CD8-positive, alpha-beta T cell (primary cell): ENCODE measurements at regions of chr10 and their contacts with region 1.

Region 1: GRCh38 chr10:47311932-47312662 is 10.2 kb upstream of the GDF2 start:
- DNase-seq: peak; percentile 62 to 89 (median 82)
- ATAC-seq: peak; percentile 77
- H3K4me3 ChIP-seq: no peak overlapping the region
- H3K4me3 Mint-ChIP-seq: peak overlapping the region; percentile 61
- H3K27ac ChIP-seq: peak overlapping the region; percentile 6 to 10
- H3K27ac Mint-ChIP-seq: peak overlapping the region; percentile 85
- H3K4me1 ChIP-seq: peaks cover 29% of the 10 kb centered on the region
- H3K4me1 Mint-ChIP-seq: peaks cover 36% of the 10 kb centered on the region
- H3K27me3 ChIP-seq: no peaks in the 10 kb centered on the region
- H3K27me3 Mint-ChIP-seq: no peaks in the 10 kb centered on the region
- CTCF ChIP-seq: peak; percentile 92

Region 2: DNA sequence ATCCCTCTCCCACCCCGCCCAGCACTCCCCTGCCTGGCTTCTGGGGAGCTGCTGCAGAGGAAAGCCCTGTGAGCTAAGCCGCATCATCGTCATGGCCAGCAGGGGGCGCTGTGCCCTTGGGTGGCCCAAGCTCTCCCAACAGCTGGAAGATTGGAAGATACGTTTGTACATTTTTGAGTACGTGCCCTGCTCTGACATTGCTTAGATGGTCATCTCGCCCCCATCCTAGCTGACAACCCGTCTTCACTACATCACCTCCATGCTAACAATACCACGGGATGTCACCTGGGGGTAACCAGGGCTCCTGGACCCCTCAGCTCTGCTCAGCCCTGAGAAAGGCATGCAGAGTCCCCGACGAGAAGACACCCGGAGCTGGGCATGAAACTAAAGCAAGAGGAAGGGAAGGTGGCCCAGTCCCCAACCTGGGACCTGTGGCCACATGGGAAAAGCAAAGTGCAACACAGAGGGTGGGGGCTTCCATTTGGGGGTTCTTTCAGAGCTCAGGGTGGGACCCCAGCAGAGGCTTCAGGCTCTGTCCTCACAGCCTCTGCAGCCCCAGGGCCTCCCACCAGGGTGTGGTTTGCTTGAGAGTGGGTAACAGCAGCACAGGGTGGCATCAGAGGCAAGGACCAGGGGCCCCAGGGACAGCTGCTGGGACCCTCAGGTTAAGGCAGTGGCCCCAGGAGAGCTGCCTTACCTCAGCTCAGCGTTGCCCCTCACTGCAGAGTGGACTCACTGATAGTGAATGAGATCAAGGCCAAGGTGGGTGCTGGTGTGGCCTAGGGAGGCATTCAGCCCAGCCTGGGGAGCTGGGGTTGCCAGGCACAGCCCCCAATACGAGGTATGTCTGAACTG is 264.2 kb before region 1 on chr10:
- CTCF ChIA-PET with region 1: interaction called, 239 read pairs
- POLR2A ChIA-PET with region 1: interaction called, 22 read pairs
- intact Hi-C with region 1: loop called (anchors 1 kb)
- DNase-seq: peak; percentile 42 to 87 (median 72)
- ATAC-seq: peak; percentile 65
- H3K4me3 ChIP-seq: no peak overlapping the region
- H3K4me3 Mint-ChIP-seq: no peak overlapping the region
- H3K27ac ChIP-seq: no peak overlapping the region
- H3K27ac Mint-ChIP-seq: peak overlapping the region; percentile 49
- H3K4me1 ChIP-seq: peaks cover 16% of the 10 kb centered on the region
- H3K4me1 Mint-ChIP-seq: peaks cover 21% of the 10 kb centered on the region
- H3K27me3 ChIP-seq: no peaks in the 10 kb centered on the region
- H3K27me3 Mint-ChIP-seq: no peaks in the 10 kb centered on the region
- CTCF ChIP-seq: peak; percentile 73

Region 3: DNA sequence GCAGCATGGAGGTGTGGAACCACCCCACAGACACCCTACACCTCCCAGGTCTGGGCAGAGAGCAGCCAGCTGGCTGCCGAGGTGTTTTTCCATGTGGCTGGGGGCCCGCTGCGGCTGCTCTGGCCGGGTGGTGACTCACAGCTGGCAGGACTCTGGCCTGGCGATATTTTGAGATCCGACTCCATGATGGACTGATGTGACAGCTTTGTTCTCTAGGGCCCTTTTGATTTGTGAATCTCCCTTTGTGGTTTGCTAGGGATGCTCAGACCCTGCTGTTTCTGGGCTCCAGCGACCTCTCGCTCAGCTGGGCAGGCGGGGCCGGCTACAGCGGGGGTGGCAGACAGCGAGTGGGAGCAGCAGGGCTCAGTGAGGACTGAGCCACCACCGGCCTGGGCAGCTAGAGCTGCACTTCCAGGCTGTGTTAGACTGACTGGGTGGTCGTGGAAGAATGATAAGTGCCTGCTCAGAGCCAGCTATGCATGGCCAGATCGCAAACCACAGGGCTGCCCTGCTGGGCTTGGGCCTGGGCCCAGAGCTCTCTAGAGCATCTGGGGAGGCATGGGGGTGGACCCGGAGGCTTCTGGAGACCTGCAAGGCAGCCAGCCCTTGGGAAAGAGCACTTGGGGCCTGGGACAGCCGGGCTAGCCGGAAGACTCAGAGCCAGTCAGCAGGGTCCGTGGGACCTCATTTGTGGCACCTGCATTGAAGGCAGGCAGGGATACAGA is 58.3 kb before region 1 on chr10:
- CTCF ChIA-PET with region 1: interaction called, 11 read pairs
- POLR2A ChIA-PET with region 1: no interaction called
- intact Hi-C with region 1: no loop called
- DNase-seq: no peak
- ATAC-seq: no peak
- H3K4me3 ChIP-seq: no peak overlapping the region
- H3K4me3 Mint-ChIP-seq: no peak overlapping the region
- H3K27ac ChIP-seq: no peak overlapping the region
- H3K27ac Mint-ChIP-seq: no peak overlapping the region
- H3K4me1 ChIP-seq: peaks cover 41% of the 10 kb centered on the region
- H3K4me1 Mint-ChIP-seq: peaks cover 52% of the 10 kb centered on the region
- H3K27me3 ChIP-seq: no peaks in the 10 kb centered on the region
- H3K27me3 Mint-ChIP-seq: no peaks in the 10 kb centered on the region
- CTCF ChIP-seq: no peak

Region 4: GRCh38 chr10:47277352-47278151 is 34.5 kb before region 1 on chr10:
- CTCF ChIA-PET with region 1: interaction called, 11 read pairs
- POLR2A ChIA-PET with region 1: no interaction called
- intact Hi-C with region 1: no loop called
- DNase-seq: peak in 8 of 9 experiments; percentile 38 to 76 (median 52)
- ATAC-seq: peak; percentile 91
- H3K4me3 ChIP-seq: no peak overlapping the region
- H3K4me3 Mint-ChIP-seq: peak overlapping the region; percentile 37
- H3K27ac ChIP-seq: no peak overlapping the region
- H3K27ac Mint-ChIP-seq: peak overlapping the region; percentile 76
- H3K4me1 ChIP-seq: peaks cover 25% of the 10 kb centered on the region
- H3K4me1 Mint-ChIP-seq: peaks cover 36% of the 10 kb centered on the region
- H3K27me3 ChIP-seq: no peaks in the 10 kb centered on the region
- H3K27me3 Mint-ChIP-seq: no peaks in the 10 kb centered on the region
- CTCF ChIP-seq: no peak

Region 5: GRCh38 chr10:47300429-47300931 is 11.6 kb before region 1 on chr10:
- CTCF ChIA-PET with region 1: interaction called, 23 read pairs
- POLR2A ChIA-PET with region 1: interaction called, 4 read pairs
- intact Hi-C with region 1: no loop called
- DNase-seq: no peak
- ATAC-seq: peak; percentile 16
- H3K4me3 ChIP-seq: peak overlapping the region; percentile 20 to 56
- H3K4me3 Mint-ChIP-seq: peak overlapping the region; percentile 85
- H3K27ac ChIP-seq: no peak overlapping the region
- H3K27ac Mint-ChIP-seq: no peak overlapping the region
- H3K4me1 ChIP-seq: peaks cover 14% of the 10 kb centered on the region
- H3K4me1 Mint-ChIP-seq: peaks cover 27% of the 10 kb centered on the region
- H3K27me3 ChIP-seq: peaks cover 0 to 2% of the 10 kb centered on the region in 2 experiments
- H3K27me3 Mint-ChIP-seq: peaks cover 8% of the 10 kb centered on the region
- CTCF ChIP-seq: no peak

Region 6: DNA sequence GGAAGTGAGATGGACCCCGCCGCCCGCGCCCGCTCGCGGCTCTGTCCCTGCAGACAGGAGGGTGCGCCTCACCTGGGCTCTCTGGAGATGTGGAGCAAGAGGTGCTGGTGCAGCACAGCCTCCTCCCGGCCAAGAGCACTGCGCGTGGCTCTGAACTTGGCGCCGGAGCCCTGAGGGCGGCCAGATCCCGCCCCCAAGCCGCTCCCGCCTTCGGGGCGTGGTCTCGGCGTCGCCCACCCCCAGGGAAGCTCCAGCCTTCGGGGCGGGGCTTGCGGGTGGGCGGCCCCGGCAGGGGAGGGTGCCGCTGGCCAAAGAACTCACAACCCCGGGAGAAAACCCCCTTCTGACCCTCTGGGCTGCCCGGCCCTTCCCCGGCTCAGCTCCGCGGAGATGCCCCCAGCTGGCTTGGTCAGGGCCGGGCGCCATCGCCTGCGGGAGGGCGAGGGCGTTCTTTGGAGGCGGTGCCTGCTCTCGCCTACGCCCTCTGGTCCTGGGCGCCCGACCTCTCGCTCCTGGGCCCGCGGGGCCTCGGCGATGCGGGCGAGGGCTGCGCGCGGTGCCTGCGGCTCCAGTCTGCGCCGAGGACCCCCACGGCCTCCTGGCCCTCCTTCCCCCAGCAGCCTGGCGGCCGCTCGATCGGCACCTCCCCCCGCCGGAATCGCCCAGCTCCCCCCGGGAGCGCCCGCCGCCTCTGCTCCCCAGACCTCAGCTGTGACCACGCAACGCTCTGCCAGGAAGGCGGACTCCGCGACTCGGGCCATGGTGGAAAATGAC is 72.2 kb after region 1 on chr10 and contains the start of gene ZNF488:
- CTCF ChIA-PET with region 1: interaction called, 3 read pairs
- POLR2A ChIA-PET with region 1: no interaction called
- intact Hi-C with region 1: loop called in 1 of 2 experiments (anchors 2 kb)
- DNase-seq: peak; percentile 34 to 85 (median 65)
- ATAC-seq: peak; percentile 94
- H3K4me3 ChIP-seq: peak within 1 kb of the TSS; percentile 60 to 73
- H3K4me3 Mint-ChIP-seq: peak within 1 kb of the TSS; percentile 91
- H3K27ac ChIP-seq: no peak within 1 kb of the TSS
- H3K27ac Mint-ChIP-seq: no peak within 1 kb of the TSS
- H3K4me1 ChIP-seq: no peaks in the 10 kb centered on the region
- H3K4me1 Mint-ChIP-seq: peaks cover 9% of the 10 kb centered on the region
- H3K27me3 ChIP-seq: no peaks in the 10 kb centered on the region
- H3K27me3 Mint-ChIP-seq: peaks cover 31% of the 10 kb centered on the region
- CTCF ChIP-seq: no peak
- total RNA-seq, gene ZNF488: not detected